Keratinocyte (primary cell): ENCODE measurements at regions of chr9 and their contacts with region 1.

Region 1: DNA sequence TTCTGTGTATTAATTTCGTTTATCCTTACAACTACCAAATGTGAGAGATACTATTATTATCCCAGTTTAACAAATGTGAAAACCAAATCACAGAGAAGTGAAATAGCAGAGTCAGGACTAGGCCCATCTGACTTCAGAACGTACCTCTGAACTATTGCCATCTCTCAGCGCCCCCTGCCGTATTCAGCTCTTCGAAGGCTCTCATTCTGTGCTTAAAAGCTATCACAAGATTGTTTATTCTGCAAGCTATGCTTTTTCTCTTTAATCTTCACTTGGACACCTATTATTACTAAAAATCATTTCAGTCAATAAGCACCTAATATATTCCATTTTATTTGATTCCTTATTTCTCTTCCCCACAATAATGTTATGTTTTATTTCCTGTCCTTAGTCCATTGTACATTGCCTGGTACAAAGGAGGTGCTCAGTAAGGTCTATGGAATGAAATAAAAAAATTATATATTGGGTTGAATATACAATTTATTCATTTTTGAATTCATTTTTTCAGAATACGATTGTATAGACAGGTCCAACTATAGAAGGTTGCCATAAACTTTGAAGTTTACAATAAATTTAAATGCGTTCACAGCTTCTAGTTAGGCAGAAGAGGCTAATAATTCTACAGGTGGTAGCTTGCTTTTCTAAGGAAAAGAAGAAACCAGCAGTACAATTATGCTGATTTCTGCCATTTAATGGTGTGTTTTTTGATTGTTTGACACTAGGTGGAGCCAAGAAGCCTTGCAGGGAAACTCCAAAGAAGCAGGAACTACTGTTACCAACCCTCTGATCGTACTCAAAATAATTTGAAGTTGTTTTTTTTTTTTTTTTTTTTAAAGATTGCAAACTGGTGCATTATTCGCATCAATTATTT is 202.2 kb upstream of the DMRTA1 start:
- DNase-seq: no peak
- H3K4me3 ChIP-seq: no peak overlapping the region
- H3K27ac ChIP-seq: peak overlapping the region; percentile 30
- H3K4me1 ChIP-seq: peaks cover 22% of the 10 kb centered on the region
- H3K27me3 ChIP-seq: no peaks in the 10 kb centered on the region
- CTCF ChIP-seq: peak; percentile 52 to 68 (median 59)

Region 2: DNA sequence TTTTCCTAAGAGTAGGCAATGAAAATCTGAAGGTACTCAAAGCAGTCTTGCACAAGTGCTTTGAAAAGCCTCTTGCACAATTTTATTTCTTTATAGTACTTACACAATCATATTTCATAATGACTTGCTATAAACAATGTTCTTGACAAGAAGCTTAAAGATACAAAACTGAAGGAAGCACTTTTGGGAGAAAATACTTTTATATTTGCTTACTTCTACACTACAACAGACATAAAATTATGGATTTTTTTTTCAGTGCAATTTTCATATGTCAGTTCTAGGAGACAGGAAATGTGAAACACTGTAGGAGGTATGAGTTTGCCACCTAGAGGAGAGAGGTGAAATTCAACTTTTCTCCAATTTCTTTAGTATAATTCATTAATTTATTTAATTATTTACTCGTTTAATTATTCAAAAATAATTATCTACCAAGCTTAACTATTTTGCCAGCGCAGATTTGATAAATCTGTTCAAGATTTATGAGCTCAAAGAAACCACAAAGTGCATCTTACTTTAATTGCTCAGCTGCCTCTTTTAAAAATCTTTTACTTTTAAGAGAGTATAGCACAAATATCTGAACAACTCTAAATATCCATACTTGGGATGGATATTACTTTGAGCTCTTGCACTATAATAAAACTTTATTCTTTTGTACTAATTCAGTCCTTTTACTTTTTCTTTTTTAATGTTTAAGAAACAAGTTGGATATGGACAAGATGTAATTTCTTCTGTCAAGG is 206.3 kb before region 1 on chr9:
- dilution Hi-C with region 1: loop called (anchors 25 kb)
- DNase-seq: no peak
- H3K4me3 ChIP-seq: peak overlapping the region in 1 of 3 experiments; percentile 30
- H3K27ac ChIP-seq: peak overlapping the region; percentile 92
- H3K4me1 ChIP-seq: peaks cover 56% of the 10 kb centered on the region
- H3K27me3 ChIP-seq: no peaks in the 10 kb centered on the region
- CTCF ChIP-seq: peak in 2 of 3 experiments; percentile 14 to 28

Region 3: GRCh38 chr9:22119537-22120158 is 124.7 kb before region 1 on chr9:
- dilution Hi-C with region 1: loop called (anchors 25 kb)
- DNase-seq: no peak
- H3K4me3 ChIP-seq: no peak overlapping the region
- H3K27ac ChIP-seq: no peak overlapping the region
- H3K4me1 ChIP-seq: peaks cover 24% of the 10 kb centered on the region
- H3K27me3 ChIP-seq: no peaks in the 10 kb centered on the region
- CTCF ChIP-seq: peak; percentile 55 to 60 (median 58)